Caco-2 (cell line): ENCODE measurements at regions of chr13 and their contacts with region 1.

Region 1: GRCh38 chr13:103188713-103189326 is 122.6 kb upstream of the SLC10A2 start:
- DNase-seq: peak in 1 of 2 experiments; percentile 15
- H3K4me3 ChIP-seq: no peak overlapping the region
- H3K4me3 Mint-ChIP-seq: no peak overlapping the region
- H3K27ac Mint-ChIP-seq: no peak overlapping the region
- H3K4me1 ChIP-seq: no peaks in the 10 kb centered on the region
- H3K4me1 Mint-ChIP-seq: no peaks in the 10 kb centered on the region
- H3K27me3 ChIP-seq: no peaks in the 10 kb centered on the region
- H3K27me3 Mint-ChIP-seq: no peaks in the 10 kb centered on the region
- CTCF ChIP-seq: peak; percentile 55 to 74

Region 2: DNA sequence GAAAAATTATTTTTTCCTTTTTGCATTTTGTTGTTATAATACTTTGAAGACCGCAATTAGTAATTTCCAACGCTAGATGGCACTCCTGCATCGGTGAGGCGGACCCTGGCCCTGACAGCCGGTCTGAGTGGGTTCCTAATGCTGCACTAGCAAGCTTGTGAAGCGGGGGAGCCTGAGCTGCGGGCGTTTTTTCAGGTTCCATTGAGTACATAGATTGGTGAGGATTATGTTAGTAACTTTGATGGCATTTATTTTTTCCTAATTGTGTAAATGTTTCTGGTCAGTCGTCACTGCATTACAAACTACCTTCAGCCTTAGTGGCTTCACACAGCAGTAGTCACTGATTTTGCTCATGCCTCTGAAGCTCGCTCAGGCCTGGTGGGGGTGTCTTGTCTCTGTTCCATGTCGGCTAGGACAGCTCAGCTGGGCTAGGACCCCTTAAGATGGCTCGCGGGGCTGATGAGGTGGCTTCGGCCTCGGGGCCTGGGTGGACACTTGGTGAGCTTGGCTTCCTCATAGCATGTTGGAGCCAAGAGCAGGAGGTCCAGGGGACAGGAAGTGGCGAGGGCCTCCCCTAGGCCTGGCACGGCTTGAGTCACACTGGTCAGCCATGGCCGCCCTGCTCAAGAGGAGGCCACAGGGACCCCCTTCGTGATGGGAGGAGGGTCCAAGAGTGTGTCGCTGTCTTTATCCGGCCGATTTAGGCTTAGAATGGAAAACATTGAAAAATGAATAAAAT is 318.0 kb before region 1 on chr13:
- CTCF ChIA-PET with region 1: no interaction called
- POLR2A ChIA-PET with region 1: no interaction called
- intact Hi-C with region 1: loop called (anchors 2 kb)
- DNase-seq: peak; percentile 70 to 76
- H3K4me3 ChIP-seq: no peak overlapping the region
- H3K4me3 Mint-ChIP-seq: no peak overlapping the region
- H3K27ac Mint-ChIP-seq: no peak overlapping the region
- H3K4me1 ChIP-seq: no peaks in the 10 kb centered on the region
- H3K4me1 Mint-ChIP-seq: no peaks in the 10 kb centered on the region
- H3K27me3 ChIP-seq: no peaks in the 10 kb centered on the region; the same call in 1 of the 2 replicates
- H3K27me3 Mint-ChIP-seq: no peaks in the 10 kb centered on the region
- CTCF ChIP-seq: peak; percentile 76 to 85

Region 3: DNA sequence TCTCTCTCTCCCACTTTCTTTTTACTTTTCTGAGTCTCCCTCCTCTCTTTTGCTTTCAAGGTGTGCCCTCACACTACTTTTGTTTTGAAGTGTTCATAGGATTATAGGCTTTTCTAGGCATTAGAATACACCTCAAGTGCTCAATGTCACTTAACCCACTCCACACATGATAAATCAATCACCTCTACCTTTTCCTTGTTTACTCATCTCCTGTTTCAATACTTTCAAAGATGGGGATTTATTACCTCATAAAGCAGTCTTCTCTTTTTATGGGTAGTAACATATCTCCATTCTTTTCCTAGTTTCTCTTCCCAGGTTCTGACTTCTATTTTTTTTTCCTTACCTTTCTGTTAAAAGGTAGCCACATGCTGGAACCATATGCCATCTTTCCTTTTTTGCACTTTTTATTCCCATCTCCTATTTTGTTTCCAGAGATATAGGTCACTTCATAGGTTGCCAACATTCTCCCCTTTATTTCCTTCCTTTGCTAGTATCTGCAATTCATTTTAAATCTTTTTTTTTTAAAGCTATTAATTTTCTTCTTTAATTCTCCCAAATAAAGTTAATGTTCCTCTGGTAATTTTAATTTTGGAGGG is 15.0 kb after region 1 on chr13:
- CTCF ChIA-PET with region 1: no interaction called
- POLR2A ChIA-PET with region 1: no interaction called
- intact Hi-C with region 1: no loop called
- DNase-seq: no peak
- H3K4me3 ChIP-seq: no peak overlapping the region
- H3K4me3 Mint-ChIP-seq: no peak overlapping the region
- H3K27ac Mint-ChIP-seq: no peak overlapping the region
- H3K4me1 ChIP-seq: no peaks in the 10 kb centered on the region
- H3K4me1 Mint-ChIP-seq: no peaks in the 10 kb centered on the region
- H3K27me3 ChIP-seq: no peaks in the 10 kb centered on the region
- H3K27me3 Mint-ChIP-seq: peaks cover 3% of the 10 kb centered on the region
- CTCF ChIP-seq: no peak

Region 4: DNA sequence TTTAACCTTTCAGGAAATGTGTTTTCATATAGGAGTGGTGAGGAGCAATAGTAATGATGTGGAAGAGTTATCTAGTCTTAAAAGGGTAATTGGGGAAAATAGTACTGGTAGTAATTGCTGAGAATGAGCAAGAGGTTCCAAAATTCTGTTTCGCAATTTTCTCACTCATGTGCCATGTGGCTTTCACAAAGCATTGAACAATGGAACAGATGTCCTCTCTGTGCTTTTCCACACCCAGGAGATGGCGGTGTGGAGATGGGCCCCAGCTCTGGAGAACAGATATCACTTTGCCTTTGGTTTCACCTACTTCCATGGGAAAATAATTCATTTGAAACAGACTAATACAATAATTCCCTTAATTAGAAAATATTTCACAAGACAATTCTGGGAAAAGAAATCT is 47.4 kb after region 1 on chr13:
- CTCF ChIA-PET with region 1: no interaction called
- POLR2A ChIA-PET with region 1: no interaction called
- intact Hi-C with region 1: no loop called
- DNase-seq: peak in 1 of 2 experiments; percentile 24
- H3K4me3 ChIP-seq: no peak overlapping the region
- H3K4me3 Mint-ChIP-seq: no peak overlapping the region
- H3K27ac Mint-ChIP-seq: no peak overlapping the region
- H3K4me1 ChIP-seq: no peaks in the 10 kb centered on the region
- H3K4me1 Mint-ChIP-seq: no peaks in the 10 kb centered on the region
- H3K27me3 ChIP-seq: no peaks in the 10 kb centered on the region
- H3K27me3 Mint-ChIP-seq: no peaks in the 10 kb centered on the region
- CTCF ChIP-seq: peak in 1 of 2 experiments; percentile 26

Region 5: GRCh38 chr13:103328899-103329298 is 140.1 kb after region 1 on chr13:
- CTCF ChIA-PET with region 1: no interaction called
- POLR2A ChIA-PET with region 1: no interaction called
- intact Hi-C with region 1: loop called (anchors 1 kb)
- DNase-seq: no peak
- H3K4me3 ChIP-seq: no peak overlapping the region
- H3K4me3 Mint-ChIP-seq: no peak overlapping the region
- H3K27ac Mint-ChIP-seq: no peak overlapping the region
- H3K4me1 ChIP-seq: no peaks in the 10 kb centered on the region
- H3K4me1 Mint-ChIP-seq: no peaks in the 10 kb centered on the region
- H3K27me3 ChIP-seq: no peaks in the 10 kb centered on the region
- H3K27me3 Mint-ChIP-seq: no peaks in the 10 kb centered on the region
- CTCF ChIP-seq: no peak

Region 6: GRCh38 chr13:103625194-103625593 is 436.4 kb after region 1 on chr13:
- CTCF ChIA-PET with region 1: no interaction called
- POLR2A ChIA-PET with region 1: no interaction called
- intact Hi-C with region 1: loop called (anchors 10 kb)
- DNase-seq: no peak
- H3K4me3 ChIP-seq: no peak overlapping the region
- H3K4me3 Mint-ChIP-seq: no peak overlapping the region
- H3K27ac Mint-ChIP-seq: no peak overlapping the region
- H3K4me1 ChIP-seq: no peaks in the 10 kb centered on the region
- H3K4me1 Mint-ChIP-seq: no peaks in the 10 kb centered on the region
- H3K27me3 ChIP-seq: no peaks in the 10 kb centered on the region
- H3K27me3 Mint-ChIP-seq: no peaks in the 10 kb centered on the region
- CTCF ChIP-seq: no peak

Region 7: DNA sequence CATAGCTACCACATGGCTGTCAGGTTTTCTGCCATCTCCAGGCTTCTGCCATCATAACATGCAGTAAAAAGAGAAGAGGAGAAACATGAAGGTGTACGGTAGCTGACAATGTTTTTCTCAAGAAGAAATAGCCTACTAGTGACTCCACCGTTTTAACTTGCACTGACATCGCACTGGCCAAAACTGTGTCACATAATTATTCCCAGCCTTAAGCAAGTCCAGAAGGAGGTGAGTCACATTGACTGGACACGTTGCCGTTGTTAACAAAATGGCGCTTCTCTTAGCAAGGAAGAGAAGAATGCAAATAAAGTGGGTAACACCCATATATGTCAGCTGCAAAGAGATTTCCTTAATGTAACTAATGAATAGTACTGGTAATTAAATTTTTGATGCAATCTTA is 687.8 kb after region 1 on chr13:
- CTCF ChIA-PET with region 1: no interaction called
- POLR2A ChIA-PET with region 1: no interaction called
- intact Hi-C with region 1: loop called (anchors 5 kb)
- DNase-seq: no peak
- H3K4me3 ChIP-seq: no peak overlapping the region
- H3K4me3 Mint-ChIP-seq: no peak overlapping the region
- H3K27ac Mint-ChIP-seq: no peak overlapping the region
- H3K4me1 ChIP-seq: peaks cover 12% of the 10 kb centered on the region; the same call in 1 of the 2 replicates
- H3K4me1 Mint-ChIP-seq: no peaks in the 10 kb centered on the region
- H3K27me3 ChIP-seq: no peaks in the 10 kb centered on the region
- H3K27me3 Mint-ChIP-seq: no peaks in the 10 kb centered on the region
- CTCF ChIP-seq: no peak

Region 8: GRCh38 chr13:104074326-104074725 is 885.5 kb after region 1 on chr13:
- CTCF ChIA-PET with region 1: no interaction called
- POLR2A ChIA-PET with region 1: no interaction called
- intact Hi-C with region 1: no loop called
- DNase-seq: no peak
- H3K4me3 ChIP-seq: no peak overlapping the region
- H3K4me3 Mint-ChIP-seq: no peak overlapping the region
- H3K27ac Mint-ChIP-seq: no peak overlapping the region
- H3K4me1 ChIP-seq: no peaks in the 10 kb centered on the region
- H3K4me1 Mint-ChIP-seq: no peaks in the 10 kb centered on the region
- H3K27me3 ChIP-seq: no peaks in the 10 kb centered on the region
- H3K27me3 Mint-ChIP-seq: no peaks in the 10 kb centered on the region
- CTCF ChIP-seq: no peak